ENCODE measurements at regions of chr1 and their contacts with region 1.

Region 1: GRCh38 chr1:12208764-12209494 is 20.9 kb upstream of the VPS13D start:
- DNase-seq: peak; percentile 64 to 92 (median 79)
- ATAC-seq: peak; percentile 89
- H3K4me3 ChIP-seq: no peak overlapping the region
- H3K4me3 Mint-ChIP-seq: peak overlapping the region in 6 of 10 donors; percentile 23 to 47 (median 34)
- H3K27ac ChIP-seq: peak overlapping the region; percentile 25
- H3K27ac Mint-ChIP-seq: peak overlapping the region; percentile 18 to 90 (median 76)
- H3K4me1 ChIP-seq: peaks cover 32 to 39% of the 10 kb centered on the region in 2 donors
- H3K4me1 Mint-ChIP-seq: peaks cover 32 to 56% (median 51%) of the 10 kb centered on the region in 7 donors
- H3K27me3 ChIP-seq: no peaks in the 10 kb centered on the region
- H3K27me3 Mint-ChIP-seq: no peaks in the 10 kb centered on the region

Region 2: GRCh38 chr1:12132092-12132491 is 76.8 kb before region 1 on chr1:
- CTCF ChIA-PET with region 1: interaction called, 250 read pairs
- POLR2A ChIA-PET with region 1: interaction called, 64 read pairs
- intact Hi-C with region 1: no loop called
- DNase-seq: no peak
- ATAC-seq: no peak
- H3K4me3 ChIP-seq: no peak overlapping the region
- H3K4me3 Mint-ChIP-seq: peak overlapping the region in 8 of 10 donors; percentile 17 to 88 (median 41)
- H3K27ac ChIP-seq: peak overlapping the region; percentile 61
- H3K27ac Mint-ChIP-seq: peak overlapping the region; percentile 91 to 97 (median 94)
- H3K4me1 ChIP-seq: peaks cover 20 to 33% of the 10 kb centered on the region in 2 donors
- H3K4me1 Mint-ChIP-seq: peaks cover 15 to 42% (median 36%) of the 10 kb centered on the region in 7 donors
- H3K27me3 ChIP-seq: no peaks in the 10 kb centered on the region
- H3K27me3 Mint-ChIP-seq: no peaks in the 10 kb centered on the region

Region 3: DNA sequence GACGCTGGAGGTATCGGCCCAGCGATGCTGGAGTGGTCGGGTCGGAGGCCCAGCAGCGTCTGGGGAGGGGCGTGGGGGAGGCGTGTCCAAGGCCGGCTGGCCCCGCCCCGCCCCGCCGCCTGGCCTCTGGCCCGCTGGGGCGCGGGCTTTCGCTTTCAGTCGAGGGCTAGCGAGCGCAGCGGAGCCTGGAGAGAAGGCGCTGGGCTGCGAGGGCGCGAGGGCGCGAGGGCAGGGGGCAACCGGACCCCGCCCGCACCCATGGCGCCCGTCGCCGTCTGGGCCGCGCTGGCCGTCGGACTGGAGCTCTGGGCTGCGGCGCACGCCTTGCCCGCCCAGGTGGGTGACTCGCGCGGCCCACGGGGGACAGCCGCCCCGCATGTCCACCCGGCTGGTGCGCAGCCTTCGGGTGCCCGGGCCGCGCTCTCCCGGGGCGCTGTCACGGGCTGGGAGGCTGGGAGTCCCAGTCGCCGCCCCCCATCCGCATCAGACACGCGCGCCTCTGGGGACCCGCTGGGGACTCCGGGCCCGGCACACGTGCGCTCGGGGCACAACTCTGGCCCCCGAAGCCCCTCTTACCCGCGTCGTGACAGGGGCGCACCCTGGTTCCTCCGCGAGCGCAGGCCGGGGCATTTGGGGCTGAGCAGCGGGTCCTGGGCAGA is 42.0 kb before region 1 on chr1 and contains the start of gene TNFRSF1B:
- CTCF ChIA-PET with region 1: interaction called, 3 read pairs
- POLR2A ChIA-PET with region 1: interaction called, 3 read pairs
- intact Hi-C with region 1: loop called in 1 of 2 experiments (anchors 5 kb)
- DNase-seq: peak; percentile 42 to 84 (median 51)
- ATAC-seq: peak; percentile 82
- H3K4me3 ChIP-seq: peak within 1 kb of the TSS; percentile 84
- H3K4me3 Mint-ChIP-seq: peak within 1 kb of the TSS; percentile 94 to 100 (median 98)
- H3K27ac ChIP-seq: peak within 1 kb of the TSS; percentile 91
- H3K27ac Mint-ChIP-seq: peak within 1 kb of the TSS; percentile 94 to 100 (median 98)
- H3K4me1 ChIP-seq: peaks cover 19 to 59% of the 10 kb centered on the region in 2 donors
- H3K4me1 Mint-ChIP-seq: peaks cover 42 to 83% (median 60%) of the 10 kb centered on the region in 7 donors
- H3K27me3 ChIP-seq: no peaks in the 10 kb centered on the region
- H3K27me3 Mint-ChIP-seq: no peaks in the 10 kb centered on the region
- total RNA-seq, gene TNFRSF1B: 38.6 to 278 (median 60.3) TPM

Region 4: DNA sequence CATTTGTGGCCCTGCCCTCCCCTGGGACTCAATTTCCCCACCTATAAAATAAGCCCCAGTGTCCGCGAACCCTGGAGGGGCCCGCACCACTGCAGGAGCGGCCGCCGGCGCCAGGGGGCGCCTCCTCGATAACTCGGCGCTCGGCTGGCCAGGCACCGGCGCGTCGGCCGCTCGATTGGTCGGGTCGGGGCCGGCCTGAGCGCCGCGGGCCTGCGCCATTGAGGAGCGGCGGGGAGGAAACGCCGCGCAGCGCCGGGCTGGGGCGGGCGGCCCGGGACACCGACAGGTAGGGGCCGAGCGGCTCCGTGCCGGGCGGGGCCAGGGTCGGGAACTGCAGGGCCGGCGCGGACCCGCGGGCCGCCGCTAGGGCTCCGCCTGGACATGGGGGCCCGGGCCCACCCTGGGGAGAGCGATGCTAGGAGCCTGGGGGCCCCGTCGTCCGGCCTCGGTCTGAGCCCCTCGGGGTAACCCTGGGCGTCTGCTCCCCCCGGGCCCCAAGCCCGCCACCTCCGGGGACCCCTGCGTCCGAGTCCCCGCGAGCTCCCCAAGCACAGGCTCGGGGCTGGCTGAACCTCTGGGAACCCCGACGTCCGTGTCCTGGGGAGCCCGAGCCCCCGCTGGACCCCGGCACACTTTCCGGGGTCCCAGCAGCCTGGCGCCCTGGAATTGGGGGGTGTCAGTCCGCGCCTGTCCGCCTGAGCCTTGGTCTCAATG is 21.1 kb after region 1 on chr1 and contains the start of gene VPS13D:
- CTCF ChIA-PET with region 1: interaction called, 5 read pairs
- POLR2A ChIA-PET with region 1: interaction called, 4 read pairs
- intact Hi-C with region 1: loop called in 1 of 2 experiments (anchors 2 kb)
- DNase-seq: peak; percentile 70 to 89 (median 84)
- ATAC-seq: peak; percentile 98
- H3K4me3 ChIP-seq: peak within 1 kb of the TSS; percentile 82
- H3K4me3 Mint-ChIP-seq: peak within 1 kb of the TSS; percentile 84 to 95 (median 90)
- H3K27ac ChIP-seq: peak within 1 kb of the TSS; percentile 92
- H3K27ac Mint-ChIP-seq: peak within 1 kb of the TSS; percentile 63 to 91 (median 85)
- H3K4me1 ChIP-seq: peaks cover 19 to 21% of the 10 kb centered on the region in 2 donors
- H3K4me1 Mint-ChIP-seq: peaks cover 4 to 38% (median 27%) of the 10 kb centered on the region in 7 donors
- H3K27me3 ChIP-seq: no peaks in the 10 kb centered on the region
- H3K27me3 Mint-ChIP-seq: peaks cover 0 to 6% (median 0%) of the 10 kb centered on the region in 5 donors
- total RNA-seq, gene VPS13D: 43.8 to 94.4 (median 77.3) TPM

Region 5: DNA sequence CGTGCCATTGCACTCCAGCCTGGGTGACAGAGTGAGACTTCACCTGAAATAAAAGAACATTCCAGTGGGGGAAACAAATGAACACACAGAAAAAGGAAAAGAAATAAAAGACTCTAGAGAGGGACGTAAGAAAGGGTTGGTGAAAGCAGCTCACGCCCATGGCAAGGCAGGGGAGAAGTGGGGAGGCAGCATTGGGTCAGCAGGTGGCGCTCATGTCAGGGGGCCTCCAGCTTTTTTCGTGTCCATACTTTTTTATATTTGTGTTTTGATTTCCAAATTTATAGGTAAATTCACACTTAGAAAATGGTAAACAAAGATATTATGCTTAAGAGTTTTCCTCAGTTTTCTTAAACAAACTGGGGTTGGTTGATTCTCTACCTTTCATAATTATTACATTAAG is 66.4 kb after region 1 on chr1:
- CTCF ChIA-PET with region 1: no interaction called
- POLR2A ChIA-PET with region 1: no interaction called
- intact Hi-C with region 1: no loop called
- DNase-seq: peak in 6 of 9 donors; percentile 15 to 43 (median 19)
- ATAC-seq: no peak
- H3K4me3 ChIP-seq: no peak overlapping the region
- H3K4me3 Mint-ChIP-seq: no peak overlapping the region
- H3K27ac ChIP-seq: no peak overlapping the region
- H3K27ac Mint-ChIP-seq: peak overlapping the region in 1 of 9 donors; percentile 45
- H3K4me1 ChIP-seq: no peaks in the 10 kb centered on the region
- H3K4me1 Mint-ChIP-seq: peaks cover 0 to 5% (median 0%) of the 10 kb centered on the region in 7 donors
- H3K27me3 ChIP-seq: no peaks in the 10 kb centered on the region
- H3K27me3 Mint-ChIP-seq: no peaks in the 10 kb centered on the region